ENCODE measurements at regions of chr1 and their contacts with region 1.

Region 1: DNA sequence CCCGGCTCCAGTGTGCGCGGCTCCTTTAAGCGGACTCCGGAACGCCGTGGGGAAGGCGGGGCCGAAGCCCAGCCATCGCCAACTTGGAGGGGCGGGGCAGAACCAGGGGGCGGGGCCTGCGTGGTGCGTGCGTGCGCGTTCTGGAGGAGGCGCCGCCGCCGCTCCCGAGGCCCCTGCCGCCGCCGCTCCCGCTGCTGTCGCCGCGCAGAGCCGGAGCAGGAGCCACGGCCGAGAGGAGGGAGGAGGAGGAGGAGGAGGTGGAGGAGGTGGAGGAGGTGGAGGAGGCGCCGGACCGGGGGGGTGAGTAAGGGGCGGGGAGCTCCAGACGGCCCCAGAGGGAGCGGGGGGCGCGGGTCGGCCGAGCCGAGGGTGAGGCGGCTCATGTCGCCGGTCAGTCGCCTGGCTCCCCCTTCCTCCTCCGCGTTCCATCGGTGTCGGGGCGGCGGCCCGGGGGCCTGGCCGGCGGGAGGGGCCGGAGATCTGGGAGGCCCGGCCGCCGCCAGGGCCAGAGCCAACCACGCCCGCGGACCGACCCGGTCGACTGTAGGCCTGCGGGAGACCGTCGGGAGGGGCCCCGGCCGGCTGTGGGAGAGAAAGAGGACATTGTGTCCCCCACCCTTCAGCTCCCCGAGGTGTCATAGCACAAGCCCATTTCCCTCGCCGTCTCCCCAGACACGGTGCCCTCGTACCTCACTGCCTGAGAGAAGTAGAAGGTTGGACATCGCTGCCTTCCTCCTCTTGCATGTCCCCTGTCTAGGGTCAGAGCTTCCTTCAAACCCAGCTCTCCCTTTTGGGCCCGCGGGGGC is at the start of gene RAP1A:
- DNase-seq: peak; percentile 88
- H3K4me3 Mint-ChIP-seq: peak within 1 kb of the TSS; percentile 99
- H3K27ac Mint-ChIP-seq: peak within 1 kb of the TSS; percentile 93
- H3K4me1 Mint-ChIP-seq: peaks cover 76% of the 10 kb centered on the region
- H3K27me3 Mint-ChIP-seq: no peaks in the 10 kb centered on the region
- total RNA-seq, gene RAP1A: 326 and 348 TPM in 2 replicates

Region 2: DNA sequence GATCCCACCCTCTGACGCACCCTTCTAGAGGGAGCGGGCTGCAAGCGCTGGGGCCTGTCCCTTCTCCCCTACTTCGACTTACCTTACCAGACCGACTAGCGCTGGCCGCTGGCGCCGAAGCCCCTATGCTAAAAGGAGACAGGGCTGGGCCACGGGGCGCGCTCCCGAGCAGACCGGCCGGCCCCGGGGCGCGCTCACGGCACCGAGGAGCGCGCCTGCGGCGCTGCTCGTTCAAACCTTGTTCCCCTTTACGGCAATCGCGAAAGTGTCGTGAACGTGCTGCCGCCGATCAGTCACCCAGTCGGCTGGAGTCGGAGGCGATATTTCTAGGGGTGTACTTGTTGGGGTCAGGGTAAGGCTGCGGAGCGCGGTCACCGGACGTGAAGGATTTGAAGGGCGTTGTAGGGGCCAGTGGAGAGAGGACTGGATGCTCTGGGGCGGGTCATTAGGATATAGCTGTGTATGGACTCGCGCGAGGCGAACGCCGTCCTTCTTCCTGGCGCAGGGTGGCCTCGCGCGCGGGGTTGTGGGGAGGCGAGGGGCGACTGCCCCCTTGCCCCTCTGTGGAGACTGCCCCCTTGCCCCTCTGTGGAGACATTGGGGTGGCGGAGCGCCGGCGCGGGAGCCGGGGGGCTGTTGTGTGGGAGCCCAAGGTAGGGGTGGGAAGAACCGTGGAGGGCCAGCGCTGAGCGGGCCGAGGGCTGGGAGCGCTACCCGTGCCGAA is 479.7 kb before region 1 on chr1 and contains the starts of genes CEPT1 and DRAM2:
- intact Hi-C with region 1: loop called (anchors 2 kb)
- DNase-seq: peak; percentile 89
- H3K4me3 Mint-ChIP-seq: peak within 1 kb of the TSS; percentile 100
- H3K27ac Mint-ChIP-seq: peak within 1 kb of the TSS; percentile 100
- H3K4me1 Mint-ChIP-seq: peaks cover 40% of the 10 kb centered on the region
- H3K27me3 Mint-ChIP-seq: no peaks in the 10 kb centered on the region
- total RNA-seq, gene CEPT1: 32.5 and 37.3 TPM in 2 replicates
- total RNA-seq, gene DRAM2: 24.0 and 26.6 TPM in 2 replicates

Region 3: DNA sequence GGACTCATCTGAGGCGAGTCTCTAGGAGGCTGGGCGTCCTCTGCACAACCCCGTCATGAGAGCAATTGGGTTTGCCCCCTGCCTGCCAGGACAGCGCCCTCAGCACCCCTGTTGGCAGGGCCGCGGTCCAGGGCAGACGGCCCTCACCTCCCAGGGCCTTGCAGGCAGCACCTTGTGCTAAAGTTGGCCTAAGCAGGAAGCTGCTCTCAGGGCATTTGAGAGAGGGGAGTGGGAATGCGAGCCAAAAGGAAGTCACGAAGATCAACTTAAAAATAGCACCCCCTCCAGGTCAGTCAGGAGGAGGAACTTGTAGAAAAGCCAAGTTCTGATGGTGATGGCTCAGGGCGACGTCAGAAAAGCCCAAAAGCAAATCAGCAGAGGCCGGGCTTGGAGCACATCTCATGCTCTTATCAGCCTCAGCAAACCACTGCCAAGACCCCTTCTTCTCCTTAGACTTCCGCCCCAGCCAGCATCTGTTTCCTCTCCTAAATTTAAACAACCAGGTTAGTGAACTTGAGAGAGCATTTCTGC is 103.8 kb before region 1 on chr1:
- intact Hi-C with region 1: loop called (anchors 1 kb)
- DNase-seq: no peak
- H3K4me3 Mint-ChIP-seq: peak overlapping the region; percentile 13
- H3K27ac Mint-ChIP-seq: peak overlapping the region; percentile 63
- H3K4me1 Mint-ChIP-seq: peaks cover 47% of the 10 kb centered on the region
- H3K27me3 Mint-ChIP-seq: peaks cover 2% of the 10 kb centered on the region

Region 4: GRCh38 chr1:111592389-111593361 is 27.2 kb before region 1 on chr1:
- intact Hi-C with region 1: loop called (anchors 1 kb)
- DNase-seq: peak; percentile 84
- H3K4me3 Mint-ChIP-seq: peak overlapping the region; percentile 25
- H3K27ac Mint-ChIP-seq: peak overlapping the region; percentile 91
- H3K4me1 Mint-ChIP-seq: peaks cover 76% of the 10 kb centered on the region
- H3K27me3 Mint-ChIP-seq: peaks cover 2% of the 10 kb centered on the region

Region 5: GRCh38 chr1:111656086-111657017 is 36.5 kb after region 1 on chr1:
- intact Hi-C with region 1: loop called (anchors 2 kb)
- DNase-seq: no peak
- H3K4me3 Mint-ChIP-seq: no peak overlapping the region
- H3K27ac Mint-ChIP-seq: peak overlapping the region; percentile 5
- H3K4me1 Mint-ChIP-seq: peaks cover 43% of the 10 kb centered on the region
- H3K27me3 Mint-ChIP-seq: no peaks in the 10 kb centered on the region

Measured in activated T-helper 1 cell treated with anti-CD3 and anti-CD28 coated beads, Interleukin-12 subunit alpha, Interleukin-12 subunit beta, Interleukin-2, Interleukin-4 antibody, amounts not matched to agents 30 ng/mL and 10 ng/mL and 1 ng/mL, durations not matched to agents 14 hours and 24 hours and 36 hours (primary cell).